Natural killer cell (primary cell): ENCODE measurements at regions of chr5 and their contacts with region 1.

Region 1: GRCh38 chr5:59799668-59800346 is 93.7 kb downstream of the PDE4D start:
- DNase-seq: peak in 1 of 2 donors; percentile 70
- ATAC-seq: peak; percentile 73 to 88 (median 80)
- H3K4me3 ChIP-seq: no peak overlapping the region
- H3K4me3 Mint-ChIP-seq: no peak overlapping the region
- H3K27ac ChIP-seq: peak overlapping the region; percentile 2
- H3K27ac Mint-ChIP-seq: no peak overlapping the region
- H3K4me1 ChIP-seq: no peaks in the 10 kb centered on the region
- H3K4me1 Mint-ChIP-seq: no peaks in the 10 kb centered on the region
- H3K27me3 ChIP-seq: no peaks in the 10 kb centered on the region
- H3K27me3 Mint-ChIP-seq: peaks cover 0 to 4% of the 10 kb centered on the region in 2 donors
- CTCF ChIP-seq: peak; percentile 86

Region 2: DNA sequence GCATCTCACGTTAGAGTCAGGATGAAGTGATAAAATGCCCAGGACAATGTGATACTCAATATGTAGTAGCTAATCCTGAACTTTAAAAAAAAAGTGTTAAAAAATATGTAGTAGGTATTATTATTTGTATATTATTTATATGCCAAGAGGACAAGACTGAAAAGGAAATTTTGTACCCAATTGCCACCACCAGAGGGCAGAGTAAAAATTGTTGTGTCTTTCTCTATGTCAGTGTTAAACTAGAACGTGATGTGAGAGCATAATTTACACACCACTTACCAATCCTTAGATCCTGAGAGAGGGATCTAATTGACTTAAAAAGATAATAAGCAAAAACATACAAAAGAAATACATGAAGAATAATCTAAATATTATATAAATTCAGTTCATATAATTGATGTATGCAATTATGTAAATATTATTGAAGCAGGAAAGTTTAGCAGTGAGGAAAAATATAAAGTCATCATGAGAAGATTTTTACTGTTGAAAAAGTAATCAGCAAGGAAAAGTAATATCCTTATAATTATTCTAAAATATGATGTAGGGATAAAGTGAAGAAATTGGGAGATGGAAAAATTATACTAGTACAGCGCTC is 928.1 kb before region 1 on chr5:
- intact Hi-C with region 1: loop called (anchors 5 kb)
- DNase-seq: peak in 1 of 2 donors; percentile 60
- ATAC-seq: peak in 1 of 3 donors; percentile 60
- H3K4me3 ChIP-seq: no peak overlapping the region
- H3K4me3 Mint-ChIP-seq: no peak overlapping the region
- H3K27ac ChIP-seq: no peak overlapping the region
- H3K27ac Mint-ChIP-seq: no peak overlapping the region
- H3K4me1 ChIP-seq: no peaks in the 10 kb centered on the region
- H3K4me1 Mint-ChIP-seq: no peaks in the 10 kb centered on the region
- H3K27me3 ChIP-seq: no peaks in the 10 kb centered on the region
- H3K27me3 Mint-ChIP-seq: peaks cover 11 to 26% of the 10 kb centered on the region in 2 donors
- CTCF ChIP-seq: peak; percentile 69

Region 3: GRCh38 chr5:59390074-59390659 is 409.6 kb before region 1 on chr5:
- intact Hi-C with region 1: loop called (anchors 1 kb)
- DNase-seq: peak in 1 of 2 donors; percentile 59
- ATAC-seq: no peak
- H3K4me3 ChIP-seq: no peak overlapping the region
- H3K4me3 Mint-ChIP-seq: no peak overlapping the region
- H3K27ac ChIP-seq: no peak overlapping the region
- H3K27ac Mint-ChIP-seq: no peak overlapping the region
- H3K4me1 ChIP-seq: no peaks in the 10 kb centered on the region
- H3K4me1 Mint-ChIP-seq: no peaks in the 10 kb centered on the region
- H3K27me3 ChIP-seq: no peaks in the 10 kb centered on the region
- H3K27me3 Mint-ChIP-seq: peaks cover 9 to 19% of the 10 kb centered on the region in 2 donors
- CTCF ChIP-seq: peak; percentile 92

Region 4: DNA sequence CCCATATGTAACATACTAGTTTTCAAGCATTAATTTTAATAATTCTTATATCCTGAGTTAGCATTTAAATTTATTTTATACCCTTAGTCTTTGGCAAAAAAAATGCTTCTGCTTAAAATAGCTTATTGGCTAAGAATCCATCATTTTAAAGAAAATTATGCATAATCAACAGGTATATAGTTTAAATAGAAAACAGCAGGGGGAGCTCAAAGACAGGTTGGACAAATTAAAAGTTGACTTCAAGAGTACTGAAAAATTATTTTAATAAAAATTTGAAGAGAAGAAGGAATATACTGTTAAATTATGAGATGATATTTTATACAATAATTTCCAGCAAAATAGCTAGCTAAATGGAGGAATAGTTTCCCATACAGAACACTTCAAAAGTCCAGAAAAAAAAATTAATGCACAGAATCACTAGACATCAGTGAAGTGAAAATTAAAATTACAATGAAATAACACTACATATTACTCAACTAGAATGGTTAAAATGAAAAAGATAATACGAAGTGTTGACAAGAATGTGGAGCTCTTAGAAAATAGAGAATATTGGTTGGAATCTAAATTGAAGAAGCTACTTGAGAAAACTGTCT is 293.4 kb before region 1 on chr5:
- intact Hi-C with region 1: loop called (anchors 1 kb)
- DNase-seq: peak in 1 of 2 donors; percentile 14
- ATAC-seq: no peak
- H3K4me3 ChIP-seq: no peak overlapping the region
- H3K4me3 Mint-ChIP-seq: no peak overlapping the region
- H3K27ac ChIP-seq: no peak overlapping the region
- H3K27ac Mint-ChIP-seq: no peak overlapping the region
- H3K4me1 ChIP-seq: no peaks in the 10 kb centered on the region
- H3K4me1 Mint-ChIP-seq: no peaks in the 10 kb centered on the region
- H3K27me3 ChIP-seq: no peaks in the 10 kb centered on the region
- H3K27me3 Mint-ChIP-seq: peaks cover 2 to 6% of the 10 kb centered on the region in 2 donors
- CTCF ChIP-seq: peak; percentile 50